Activated CD4-positive, alpha-beta T cell treated with anti-CD3 and anti-CD28 coated beads, Interleukin-2, amount 10 ng/mL, durations not matched to agents 7 days and 5 days (primary cell): ENCODE measurements at regions of chr17 and their contacts with region 1.

Region 1: DNA sequence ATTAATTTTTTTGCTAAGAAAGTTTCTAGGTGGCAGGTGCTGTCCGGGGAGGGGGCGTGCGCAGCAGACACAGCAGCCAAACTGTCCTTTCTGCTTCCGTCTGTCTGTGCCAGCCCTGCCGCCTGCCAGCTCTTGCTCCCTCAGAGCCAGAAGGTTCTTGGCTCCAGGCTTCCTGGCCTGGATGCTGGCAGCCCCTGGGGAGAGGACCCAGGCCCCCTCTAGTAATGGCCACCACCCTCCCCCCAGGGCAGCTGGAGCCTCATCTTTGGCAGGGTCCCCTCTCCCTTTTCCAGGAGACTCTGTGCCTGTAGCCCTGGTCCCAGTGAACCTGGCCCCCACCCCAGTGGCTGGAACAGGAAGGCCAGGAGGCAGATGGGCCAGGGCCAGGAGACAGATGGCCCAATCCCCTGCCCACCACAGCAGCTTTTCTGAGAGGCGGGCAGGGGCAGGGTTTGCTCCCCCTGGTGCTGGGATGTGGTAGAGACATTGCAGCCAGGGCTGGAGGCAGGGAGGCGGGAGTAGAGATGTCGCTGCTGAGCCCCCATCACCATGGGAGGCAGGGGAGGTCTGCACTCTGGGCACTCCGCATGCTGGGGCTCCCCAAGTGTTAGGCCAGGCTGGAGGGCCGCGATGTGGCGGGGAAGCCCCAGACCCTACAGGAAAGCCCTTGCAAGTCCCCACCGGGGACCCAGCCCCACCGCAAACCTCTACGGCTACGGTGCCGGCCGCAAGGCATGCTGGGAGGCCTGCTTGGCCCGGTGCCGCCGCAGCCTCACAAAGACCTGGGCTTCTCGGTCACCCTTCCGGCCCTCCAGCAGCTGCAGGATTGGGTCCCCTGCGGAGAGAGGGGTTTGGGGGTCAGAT is 16.7 kb downstream of the UNC13D start:
- DNase-seq: peak; percentile 68
- H3K4me3 Mint-ChIP-seq: peak overlapping the region; percentile 56
- H3K27ac Mint-ChIP-seq: peak overlapping the region; percentile 91
- H3K4me1 Mint-ChIP-seq: peaks cover 23% of the 10 kb centered on the region
- H3K27me3 Mint-ChIP-seq: no peaks in the 10 kb centered on the region

Region 2: GRCh38 chr17:75839801-75840568 is 12.5 kb after region 1 on chr17:
- CTCF ChIA-PET with region 1: interaction called, 48 read pairs
- POLR2A ChIA-PET with region 1: no interaction called
- DNase-seq: no peak
- H3K4me3 Mint-ChIP-seq: no peak overlapping the region
- H3K27ac Mint-ChIP-seq: no peak overlapping the region
- H3K4me1 Mint-ChIP-seq: peaks cover 12% of the 10 kb centered on the region
- H3K27me3 Mint-ChIP-seq: no peaks in the 10 kb centered on the region

Region 3: GRCh38 chr17:75845049-75845860 is 17.8 kb after region 1 on chr17:
- CTCF ChIA-PET with region 1: interaction called, 48 read pairs
- POLR2A ChIA-PET with region 1: no interaction called
- DNase-seq: peak; percentile 67
- H3K4me3 Mint-ChIP-seq: peak overlapping the region; percentile 48
- H3K27ac Mint-ChIP-seq: peak overlapping the region; percentile 98
- H3K4me1 Mint-ChIP-seq: peaks cover 30% of the 10 kb centered on the region
- H3K27me3 Mint-ChIP-seq: no peaks in the 10 kb centered on the region

Region 4: GRCh38 chr17:75950821-75951554 is 123.5 kb after region 1 on chr17:
- CTCF ChIA-PET with region 1: no interaction called
- POLR2A ChIA-PET with region 1: no interaction called
- DNase-seq: no peak
- H3K4me3 Mint-ChIP-seq: no peak overlapping the region
- H3K27ac Mint-ChIP-seq: no peak overlapping the region
- H3K4me1 Mint-ChIP-seq: peaks cover 17% of the 10 kb centered on the region
- H3K27me3 Mint-ChIP-seq: no peaks in the 10 kb centered on the region